ENCODE measurements at regions of chr19 and their contacts with region 1.

Region 1: GRCh38 chr19:47075179-47075810 is 26.9 kb upstream of the TMEM160 start:
- DNase-seq: no peak
- ATAC-seq: peak; percentile 62
- H3K4me3 ChIP-seq: no peak overlapping the region
- H3K27ac ChIP-seq: no peak overlapping the region
- H3K4me1 ChIP-seq: peaks cover 10% of the 10 kb centered on the region
- H3K27me3 ChIP-seq: no peaks in the 10 kb centered on the region
- CTCF ChIP-seq: no peak

Region 2: DNA sequence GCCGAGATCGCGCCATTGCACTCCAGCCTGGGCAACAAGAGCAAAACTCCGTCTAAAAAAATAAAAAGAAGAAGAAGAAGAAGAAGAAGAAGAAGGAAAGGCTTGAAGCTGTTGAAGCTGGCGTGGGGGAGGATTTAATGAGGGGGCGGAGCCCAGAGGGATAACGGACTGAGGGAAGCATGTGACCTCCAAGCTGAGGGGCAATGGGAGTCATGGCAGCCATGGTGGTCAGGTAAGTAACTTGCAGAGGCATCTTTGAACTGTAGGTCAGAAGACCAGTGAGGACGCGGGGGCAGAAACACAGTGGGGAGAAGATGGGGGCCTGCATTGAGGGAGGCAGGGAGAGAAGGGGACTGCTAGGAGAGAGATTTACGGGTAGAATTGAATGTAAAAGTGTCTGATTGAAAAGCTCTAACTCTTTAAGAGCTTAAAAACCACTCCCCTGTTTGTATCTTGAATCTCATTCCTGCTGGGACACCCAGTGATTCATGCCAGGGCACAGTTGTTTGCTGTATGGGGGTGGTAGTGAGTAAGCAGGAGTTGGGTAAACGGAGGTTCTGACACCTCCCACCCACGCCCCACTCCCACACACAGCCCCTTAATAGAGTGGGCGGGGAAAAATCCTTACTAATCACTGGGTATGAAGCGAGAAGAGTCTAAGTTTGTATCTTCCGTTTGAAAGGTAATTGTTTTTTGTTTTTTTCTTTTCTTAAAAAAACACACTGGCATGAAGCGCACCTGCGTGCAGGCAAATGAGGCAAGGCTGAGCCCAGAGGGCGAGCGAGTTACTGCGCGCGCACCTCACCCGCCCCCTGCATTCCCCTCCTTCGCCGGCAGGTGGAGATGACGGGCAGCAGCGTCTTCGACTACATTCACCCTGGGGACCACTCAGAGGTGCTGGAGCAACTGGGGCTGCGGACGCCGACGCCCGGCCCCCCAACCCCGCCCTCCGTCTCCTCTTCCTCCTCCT is 39.9 kb before region 1 on chr19:
- intact Hi-C with region 1: no loop called
- DNase-seq: peak; percentile 94
- ATAC-seq: peak; percentile 96
- H3K4me3 ChIP-seq: peak overlapping the region; percentile 51
- H3K27ac ChIP-seq: peak overlapping the region; percentile 65
- H3K4me1 ChIP-seq: peaks cover 6% of the 10 kb centered on the region
- H3K27me3 ChIP-seq: peaks cover 14% of the 10 kb centered on the region
- CTCF ChIP-seq: peak; percentile 98

Region 3: GRCh38 chr19:47124937-47125668 is 49.8 kb after region 1 on chr19:
- intact Hi-C with region 1: loop called (anchors 5 kb)
- DNase-seq: no peak
- ATAC-seq: peak; percentile 92
- H3K4me3 ChIP-seq: no peak overlapping the region
- H3K27ac ChIP-seq: peak overlapping the region; percentile 55
- H3K4me1 ChIP-seq: peaks cover under 1% of the 10 kb centered on the region
- H3K27me3 ChIP-seq: no peaks in the 10 kb centered on the region
- CTCF ChIP-seq: peak; percentile 71